Spleen (tissue), 13 donors: ENCODE measurements at regions of chr15 and their contacts with region 1.

Region 1: DNA sequence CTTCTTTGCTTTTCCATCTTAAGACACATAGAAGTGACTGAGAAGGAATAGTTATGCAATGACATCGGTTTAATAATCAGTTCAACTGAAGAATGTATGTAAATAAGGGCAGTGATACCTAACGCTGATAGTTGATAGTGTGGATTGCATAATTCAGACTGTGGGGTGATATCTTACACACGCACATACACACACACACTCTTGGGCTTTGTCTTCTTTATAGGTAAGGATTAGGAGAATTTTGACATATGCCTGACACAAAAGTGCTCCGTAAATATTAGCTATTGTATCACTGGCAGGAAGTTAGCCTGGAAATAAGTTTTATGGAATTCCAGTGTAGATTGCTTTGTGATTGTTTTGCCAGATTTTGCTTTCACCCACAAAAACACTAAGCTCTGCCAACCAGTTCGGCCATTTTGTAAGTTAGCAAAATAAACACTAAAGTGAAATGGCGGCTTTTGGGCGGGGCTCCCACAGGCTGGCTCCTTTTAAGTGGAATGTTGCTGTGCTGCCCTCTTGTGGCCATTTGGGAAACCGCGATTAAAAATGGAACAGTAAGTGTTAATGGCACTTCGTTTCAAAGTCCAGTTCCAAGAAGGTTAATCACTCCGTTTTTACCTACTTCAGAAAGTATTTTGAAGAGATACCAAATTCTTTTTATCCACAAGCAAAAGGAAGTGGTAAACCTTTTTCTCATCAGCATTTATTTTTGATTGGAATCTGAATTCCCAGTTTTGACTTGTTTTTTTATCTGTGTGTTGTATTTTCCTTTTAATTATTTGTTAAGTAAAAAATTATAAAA is 17.7 kb downstream of the CHD2 start:
- DNase-seq: peak; percentile 94
- H3K4me3 ChIP-seq: peak overlapping the region in 1 of 8 donors; percentile 17
- H3K27ac ChIP-seq: peak overlapping the region; percentile 66 to 97 (median 84)
- H3K4me1 ChIP-seq: peaks cover 78 to 100% (median 97%) of the 10 kb centered on the region in 6 donors
- H3K27me3 ChIP-seq: no peaks in the 10 kb centered on the region
- CTCF ChIP-seq: peak; percentile 71 to 96 (median 91)
- POLR2A ChIP-seq: no peak

Region 2: DNA sequence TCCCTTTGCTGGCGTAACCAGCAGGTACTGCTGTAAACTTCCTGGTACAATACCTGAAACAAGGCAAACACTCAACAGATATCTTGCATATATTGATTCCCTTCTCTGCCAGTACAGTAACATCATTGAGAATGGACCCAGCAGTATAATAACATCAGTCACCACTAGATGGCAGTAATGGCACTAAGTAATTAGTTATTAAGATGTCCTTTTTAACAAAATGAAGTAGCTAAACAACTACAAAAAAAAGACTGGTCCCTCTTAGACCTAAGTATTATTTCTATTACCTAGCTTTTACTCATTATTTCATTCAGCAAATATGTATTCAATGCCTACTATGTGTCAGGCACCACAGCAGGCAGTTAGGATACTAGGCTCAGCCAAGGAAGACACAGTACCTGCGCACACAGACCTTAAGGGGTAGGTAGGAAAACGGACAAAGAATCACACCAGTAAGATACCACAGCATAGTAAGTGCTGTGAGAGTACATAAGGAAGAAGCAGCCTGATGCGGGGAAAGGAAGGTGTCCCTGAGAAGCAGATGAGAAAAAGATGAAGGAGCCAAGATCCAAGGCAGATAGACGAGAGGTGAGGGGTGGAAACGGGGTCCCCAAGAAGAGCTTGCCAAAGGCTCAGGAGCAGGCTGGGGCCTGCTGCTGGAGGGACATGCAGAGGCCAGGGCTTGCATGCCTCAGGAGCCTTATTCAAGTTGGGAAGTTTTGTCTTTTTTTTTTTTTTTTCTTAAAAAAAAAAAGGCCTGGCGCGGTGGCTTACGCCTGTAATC is 120.4 kb before region 1 on chr15:
- intact Hi-C with region 1: loop called (anchors 5 kb)
- DNase-seq: no peak
- H3K4me3 ChIP-seq: no peak overlapping the region
- H3K27ac ChIP-seq: peak overlapping the region in 2 of 8 donors; percentile 47 to 64
- H3K4me1 ChIP-seq: peaks cover 4 to 23% (median 8%) of the 10 kb centered on the region in 6 donors
- H3K27me3 ChIP-seq: no peaks in the 10 kb centered on the region
- CTCF ChIP-seq: peak; percentile 68 to 92 (median 86)
- POLR2A ChIP-seq: no peak

Region 3: GRCh38 chr15:92808978-92809879 is 108.6 kb before region 1 on chr15:
- intact Hi-C with region 1: loop called (anchors 5 kb)
- DNase-seq: peak; percentile 100
- H3K4me3 ChIP-seq: peak overlapping the region; percentile 44 to 77 (median 52)
- H3K27ac ChIP-seq: peak overlapping the region; percentile 93 to 100 (median 98)
- H3K4me1 ChIP-seq: peaks cover 10 to 85% (median 44%) of the 10 kb centered on the region in 6 donors
- H3K27me3 ChIP-seq: no peaks in the 10 kb centered on the region
- CTCF ChIP-seq: peak; percentile 97 to 100 (median 100)
- POLR2A ChIP-seq: peak in 1 of 3 donors; percentile 65

Region 4: DNA sequence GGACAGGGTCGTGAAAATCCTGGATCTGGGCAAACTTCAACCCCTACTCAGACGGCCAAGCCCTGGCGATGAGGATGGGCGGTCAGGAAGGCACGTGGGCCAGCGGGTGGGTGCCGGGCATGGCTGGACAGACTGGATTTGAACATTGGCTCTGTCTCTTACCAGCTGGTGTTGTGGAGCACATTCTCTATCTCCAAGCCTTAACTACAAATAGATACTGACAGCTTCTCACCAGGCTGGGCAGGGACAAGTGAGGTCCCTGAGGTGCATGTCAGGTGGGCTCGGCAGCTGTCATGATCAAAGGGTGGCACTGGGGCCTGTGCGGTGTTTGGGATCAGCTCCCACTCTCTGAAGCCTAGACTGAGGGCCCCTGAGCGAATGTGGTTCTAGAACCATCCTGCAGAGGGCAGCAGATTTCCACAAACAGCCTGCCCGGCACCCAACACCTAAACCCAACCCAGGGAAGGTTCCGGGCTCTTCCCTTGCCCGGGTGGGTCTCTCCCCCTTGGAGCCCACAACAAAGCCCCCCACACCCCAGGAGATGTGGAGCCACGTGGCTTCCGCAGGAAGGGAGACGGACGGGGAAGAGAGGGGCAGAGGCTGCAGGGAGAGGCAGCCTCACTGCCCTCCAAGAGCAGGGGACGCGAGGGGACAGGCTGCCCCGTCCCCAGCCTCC is 112.8 kb after region 1 on chr15:
- intact Hi-C with region 1: no loop called
- DNase-seq: peak; percentile 87
- H3K4me3 ChIP-seq: no peak overlapping the region
- H3K27ac ChIP-seq: peak overlapping the region in 6 of 8 donors; percentile 80 to 95 (median 88)
- H3K4me1 ChIP-seq: peaks cover 6 to 58% (median 45%) of the 10 kb centered on the region in 6 donors
- H3K27me3 ChIP-seq: peaks cover 0 to 4% (median 0%) of the 10 kb centered on the region in 7 donors
- CTCF ChIP-seq: peak; percentile 62 to 95 (median 88)
- POLR2A ChIP-seq: no peak